HCT116 (cell line): ENCODE measurements at regions of chr15 and their contacts with region 1.

Region 1: GRCh38 chr15:96330450-96331145 is at the start of gene NR2F2:
- DNase-seq: peak; percentile 94
- ATAC-seq: peak; percentile 76
- H3K4me3 ChIP-seq: peak within 1 kb of the TSS; percentile 71 to 86
- H3K27ac ChIP-seq: peak within 1 kb of the TSS; percentile 98
- H3K4me1 ChIP-seq: peaks cover 32 to 54% of the 10 kb centered on the region in 2 experiments
- H3K27me3 ChIP-seq: no peaks in the 10 kb centered on the region
- CTCF ChIP-seq: no peak
- POLR2A ChIP-seq: peak; percentile 87
- RAD21 ChIP-seq: no peak; the same call in 1 of the 2 replicates
- total RNA-seq, gene NR2F2: 61.4 TPM

Region 2: GRCh38 chr15:95259513-95259912 is 1071.1 kb before region 1 on chr15:
- CTCF ChIA-PET with region 1: interaction called, 3 read pairs
- POLR2A ChIA-PET with region 1: no interaction called
- RAD21 ChIA-PET with region 1: no interaction called
- intact Hi-C with region 1: loop called (anchors 5 kb)
- DNase-seq: peak; percentile 69
- ATAC-seq: peak; percentile 94
- H3K4me3 ChIP-seq: no peak overlapping the region
- H3K27ac ChIP-seq: no peak overlapping the region
- H3K4me1 ChIP-seq: peaks cover 0 to 2% of the 10 kb centered on the region in 2 experiments; a peak in 1 of 4 replicates
- H3K27me3 ChIP-seq: no peaks in the 10 kb centered on the region
- CTCF ChIP-seq: peak; percentile 53 to 77 (median 72); a peak in 5 of 6 replicates
- POLR2A ChIP-seq: no peak
- RAD21 ChIP-seq: peak; percentile 89

Region 3: DNA sequence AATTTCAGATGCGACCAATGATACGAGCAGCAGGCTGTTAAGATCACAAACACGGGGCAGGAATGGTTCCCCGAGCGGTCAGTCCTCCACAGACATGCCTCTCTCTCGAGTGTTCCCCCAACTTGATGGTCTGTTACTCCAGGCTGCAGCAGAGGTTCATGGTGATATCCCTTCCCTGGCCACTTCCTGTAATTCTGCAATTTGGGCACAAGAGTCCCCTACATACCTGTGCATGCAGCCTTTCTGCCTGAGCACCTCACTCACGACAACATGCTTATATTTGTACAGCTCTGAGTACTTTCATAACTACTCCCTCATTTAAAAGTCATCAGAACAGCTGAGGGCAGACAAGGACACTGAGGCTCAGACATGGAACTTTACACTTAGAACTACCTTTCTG is 408.2 kb before region 1 on chr15:
- CTCF ChIA-PET with region 1: interaction called, 3 read pairs
- POLR2A ChIA-PET with region 1: no interaction called
- RAD21 ChIA-PET with region 1: interaction called in 1 of 2 experiments, 3 read pairs
- intact Hi-C with region 1: loop called (anchors 5 kb)
- DNase-seq: peak; percentile 10
- ATAC-seq: peak; percentile 73
- H3K4me3 ChIP-seq: no peak overlapping the region
- H3K27ac ChIP-seq: no peak overlapping the region
- H3K4me1 ChIP-seq: no peaks in the 10 kb centered on the region
- H3K27me3 ChIP-seq: no peaks in the 10 kb centered on the region
- CTCF ChIP-seq: peak in 1 of 3 experiments; percentile 27; a peak in 1 of 6 replicates
- POLR2A ChIP-seq: no peak
- RAD21 ChIP-seq: peak; percentile 54

Region 4: GRCh38 chr15:96273317-96274086 is 57.1 kb before region 1 on chr15:
- CTCF ChIA-PET with region 1: interaction called, 6 read pairs
- POLR2A ChIA-PET with region 1: interaction called, 5 read pairs
- RAD21 ChIA-PET with region 1: interaction called, 3 to 5 read pairs
- intact Hi-C with region 1: loop called (anchors 2 kb)
- DNase-seq: peak; percentile 100
- ATAC-seq: peak; percentile 92
- H3K4me3 ChIP-seq: peak overlapping the region in 1 of 2 experiments; percentile 44; a peak in 2 of 4 replicates
- H3K27ac ChIP-seq: peak overlapping the region; percentile 83
- H3K4me1 ChIP-seq: peaks cover 63 to 88% of the 10 kb centered on the region in 2 experiments
- H3K27me3 ChIP-seq: no peaks in the 10 kb centered on the region
- CTCF ChIP-seq: no peak
- POLR2A ChIP-seq: no peak
- RAD21 ChIP-seq: peak; percentile 36; the same call in 1 of the 2 replicates

Region 5: GRCh38 chr15:96593724-96594123 is 263.1 kb after region 1 on chr15:
- CTCF ChIA-PET with region 1: no interaction called
- POLR2A ChIA-PET with region 1: no interaction called
- RAD21 ChIA-PET with region 1: no interaction called
- intact Hi-C with region 1: loop called (anchors 2 kb)
- DNase-seq: no peak
- ATAC-seq: no peak
- H3K4me3 ChIP-seq: no peak overlapping the region
- H3K27ac ChIP-seq: no peak overlapping the region
- H3K4me1 ChIP-seq: no peaks in the 10 kb centered on the region
- H3K27me3 ChIP-seq: peaks cover 53% of the 10 kb centered on the region
- CTCF ChIP-seq: no peak
- POLR2A ChIP-seq: no peak
- RAD21 ChIP-seq: no peak

Region 6: GRCh38 chr15:97248376-97248775 is 917.8 kb after region 1 on chr15:
- CTCF ChIA-PET with region 1: interaction called, 10 read pairs
- POLR2A ChIA-PET with region 1: no interaction called
- RAD21 ChIA-PET with region 1: no interaction called
- intact Hi-C with region 1: no loop called
- DNase-seq: no peak
- ATAC-seq: no peak
- H3K4me3 ChIP-seq: no peak overlapping the region
- H3K27ac ChIP-seq: no peak overlapping the region
- H3K4me1 ChIP-seq: no peaks in the 10 kb centered on the region
- H3K27me3 ChIP-seq: no peaks in the 10 kb centered on the region
- CTCF ChIP-seq: no peak
- POLR2A ChIP-seq: no peak
- RAD21 ChIP-seq: no peak